Cardiac septum (tissue), 1 donor: ENCODE measurements at regions of chr5 and their contacts with region 1.

Region 1: GRCh38 chr5:159209438-159210305 is at the start of gene RNF145:
- DNase-seq: peak; percentile 93
- total RNA-seq, gene RNF145: 25.4 TPM

Region 2: GRCh38 chr5:158953929-158954534 is 255.6 kb before region 1 on chr5:
- intact Hi-C with region 1: no loop called
- DNase-seq: no peak

Region 3: DNA sequence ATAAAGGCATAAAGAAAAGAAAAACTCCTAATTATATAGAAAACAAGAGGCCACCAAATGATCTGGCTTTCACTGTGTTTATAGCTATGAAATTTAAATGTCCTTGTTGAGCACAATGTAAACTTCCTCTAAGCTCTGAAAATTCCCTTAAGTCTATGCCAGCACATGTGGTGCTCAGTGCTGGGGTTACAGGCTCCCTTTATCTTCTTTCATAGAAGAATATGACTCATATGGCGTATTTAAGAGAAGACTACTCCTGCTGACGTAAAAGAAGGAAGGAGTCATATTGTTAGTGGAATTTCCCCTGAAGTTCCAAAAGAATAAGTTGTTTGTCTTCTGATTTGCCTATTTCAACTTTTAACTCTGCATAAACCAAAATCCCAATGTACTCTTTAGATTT is 30.7 kb before region 1 on chr5:
- intact Hi-C with region 1: loop called (anchors 2 kb)
- DNase-seq: no peak

Region 4: DNA sequence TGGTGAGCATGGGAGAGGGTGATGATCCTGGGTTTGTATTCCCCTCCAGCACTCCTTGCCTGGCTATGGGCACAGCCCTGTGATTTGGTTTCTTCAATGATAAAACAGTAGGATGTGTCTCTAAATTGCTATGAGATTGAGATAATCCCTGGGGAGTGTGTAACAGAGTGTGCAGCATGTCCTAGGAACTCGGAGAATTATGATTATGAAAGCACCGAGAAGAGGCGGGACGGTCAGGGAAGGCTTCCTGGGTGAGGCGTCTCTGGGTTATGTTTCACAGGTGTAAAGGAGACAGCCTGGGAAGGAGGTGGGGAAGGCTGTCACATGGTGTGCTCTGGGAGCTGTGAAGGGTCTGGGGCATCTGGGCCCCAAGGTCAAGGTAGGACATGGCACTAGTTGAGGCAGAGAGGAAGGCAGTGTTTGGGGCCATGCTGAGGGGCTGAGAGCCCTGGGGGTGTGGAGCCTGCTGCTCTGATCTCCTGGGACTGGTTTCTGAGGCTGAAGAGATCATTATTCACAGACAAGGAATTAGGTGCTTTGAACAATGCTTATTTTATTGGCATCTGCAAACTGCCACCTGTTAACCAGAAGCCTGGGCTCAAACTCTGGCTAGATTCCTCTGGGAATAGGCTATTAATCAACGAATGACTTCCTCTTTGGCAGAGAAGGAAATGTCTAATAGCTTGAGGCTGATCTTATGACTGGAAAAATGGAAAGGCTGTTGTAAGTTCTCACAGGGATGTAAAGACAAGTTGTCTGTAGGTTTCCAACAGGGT is 194.4 kb after region 1 on chr5:
- intact Hi-C with region 1: no loop called
- DNase-seq: no peak